PC-9 (cell line): ENCODE measurements at regions of chr6 and their contacts with region 1.

Region 1: GRCh38 chr6:75208298-75209183 is 2.7 kb upstream of the COL12A1 start:
- DNase-seq: peak; percentile 63 to 83
- H3K4me3 ChIP-seq: no peak overlapping the region
- H3K27ac ChIP-seq: no peak overlapping the region
- H3K4me1 ChIP-seq: peaks cover 28% of the 10 kb centered on the region; the same call in 1 of the 2 replicates
- H3K27me3 ChIP-seq: 0 out of 2 replicates have a peak, but pooled peaks cover 4% of the 10 kb centered on the region
- CTCF ChIP-seq: peak; percentile 88

Region 2: DNA sequence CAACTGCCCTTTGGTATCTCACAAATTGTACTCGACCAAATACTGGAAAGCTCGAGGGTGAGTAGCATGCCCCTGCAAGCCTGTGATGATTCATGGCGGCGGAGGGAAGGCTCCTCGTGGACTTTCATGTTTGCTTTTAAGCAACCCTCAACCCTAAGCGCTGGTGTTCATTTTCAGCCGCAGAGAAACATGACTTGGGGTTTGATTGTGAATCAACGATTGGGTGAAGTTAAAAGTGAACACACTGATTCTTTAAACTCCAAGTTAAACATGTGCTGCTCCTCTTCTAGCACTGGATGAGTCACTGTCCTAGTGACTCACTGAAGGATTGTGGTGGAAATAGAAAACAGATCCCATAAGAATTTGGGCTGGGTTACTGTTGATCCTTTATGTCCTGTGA is 1504.3 kb before region 1 on chr6:
- CTCF ChIA-PET with region 1: interaction called, 13 read pairs
- POLR2A ChIA-PET with region 1: interaction called, 3 read pairs
- intact Hi-C with region 1: no loop called
- DNase-seq: peak; percentile 78 to 83
- H3K4me3 ChIP-seq: peak overlapping the region; percentile 11; the same call in 1 of the 2 replicates
- H3K27ac ChIP-seq: peak overlapping the region; percentile 80
- H3K4me1 ChIP-seq: peaks cover 26% of the 10 kb centered on the region
- H3K27me3 ChIP-seq: no peaks in the 10 kb centered on the region
- CTCF ChIP-seq: no peak

Region 3: DNA sequence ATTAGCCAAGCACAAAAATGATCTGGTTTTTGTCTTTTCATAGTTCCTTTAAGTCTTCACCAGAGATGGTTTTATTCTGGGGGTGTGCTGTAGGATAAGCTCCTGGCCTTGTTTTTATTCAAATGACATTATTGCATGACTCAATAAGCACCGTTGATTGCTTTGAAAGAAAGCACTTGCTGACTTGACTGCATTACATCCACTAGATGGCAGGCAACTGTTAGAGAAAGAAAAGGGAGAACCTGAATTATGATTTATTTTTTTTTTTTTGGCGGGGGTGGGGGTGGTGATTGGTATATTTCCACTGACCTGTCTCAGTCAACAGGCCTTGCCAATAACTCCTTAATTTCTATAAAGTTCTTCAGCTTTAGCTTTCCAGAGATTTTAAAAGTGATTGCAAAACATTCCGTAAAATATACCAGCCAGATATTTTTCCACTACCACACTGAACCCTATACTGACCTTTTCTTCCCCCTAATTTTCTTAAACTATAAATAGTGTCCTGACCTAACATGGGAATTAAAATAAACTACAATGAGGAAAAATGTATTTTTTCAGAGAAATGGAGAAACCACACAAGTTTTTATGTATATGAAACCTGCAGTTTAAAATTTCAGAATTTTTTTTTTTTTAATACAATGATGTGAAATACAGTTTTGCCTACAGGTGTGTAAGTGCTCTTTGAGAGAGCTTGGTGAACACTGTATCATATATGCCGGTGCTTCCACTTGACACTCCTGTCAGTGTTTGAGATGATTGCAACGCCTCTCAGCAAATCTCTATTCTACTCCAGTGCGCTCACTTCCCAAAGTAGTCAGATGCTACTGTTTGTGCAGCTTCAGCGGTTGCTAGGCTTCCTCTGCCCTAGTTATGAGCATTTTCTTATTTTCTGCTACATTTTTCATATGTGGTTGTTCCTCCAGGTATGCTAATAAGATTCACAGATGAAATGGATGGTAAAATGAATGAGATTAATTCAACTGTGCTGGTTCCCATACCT is 1238.3 kb before region 1 on chr6:
- CTCF ChIA-PET with region 1: no interaction called
- POLR2A ChIA-PET with region 1: no interaction called
- intact Hi-C with region 1: loop called (anchors 1 kb)
- DNase-seq: peak in 1 of 2 experiments; percentile 56
- H3K4me3 ChIP-seq: no peak overlapping the region
- H3K27ac ChIP-seq: no peak overlapping the region
- H3K4me1 ChIP-seq: peaks cover 5% of the 10 kb centered on the region; the same call in 1 of the 2 replicates
- H3K27me3 ChIP-seq: no peaks in the 10 kb centered on the region
- CTCF ChIP-seq: peak; percentile 88

Region 4: DNA sequence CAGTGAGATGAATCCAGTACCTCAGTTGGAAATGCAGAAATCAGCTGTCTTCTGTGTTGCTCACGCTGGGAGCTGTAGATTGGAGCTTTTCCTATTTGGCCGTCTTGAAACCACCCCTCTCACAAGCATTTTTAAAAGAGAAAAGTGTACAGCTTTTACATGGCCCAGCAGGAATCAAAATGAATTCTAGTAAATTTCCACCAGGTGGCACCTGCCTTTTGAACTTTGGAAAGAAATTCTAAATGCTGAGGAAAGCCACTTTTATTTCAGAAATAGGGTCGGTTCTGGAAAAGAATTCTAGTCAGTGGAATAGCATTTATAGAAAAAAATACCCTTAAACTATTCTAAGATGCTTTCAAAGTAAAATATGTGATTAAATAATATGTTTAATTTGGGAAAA is 864.7 kb before region 1 on chr6:
- CTCF ChIA-PET with region 1: interaction called, 4 read pairs
- POLR2A ChIA-PET with region 1: no interaction called
- intact Hi-C with region 1: loop called (anchors 5 kb)
- DNase-seq: no peak
- H3K4me3 ChIP-seq: no peak overlapping the region
- H3K27ac ChIP-seq: no peak overlapping the region
- H3K4me1 ChIP-seq: no peaks in the 10 kb centered on the region
- H3K27me3 ChIP-seq: no peaks in the 10 kb centered on the region
- CTCF ChIP-seq: peak; percentile 49; the same call in 1 of the 2 replicates

Region 5: GRCh38 chr6:74606581-74607071 is 601.9 kb before region 1 on chr6:
- CTCF ChIA-PET with region 1: no interaction called
- POLR2A ChIA-PET with region 1: no interaction called
- intact Hi-C with region 1: loop called (anchors 10 kb)
- DNase-seq: peak; percentile 18 to 59
- H3K4me3 ChIP-seq: no peak overlapping the region
- H3K27ac ChIP-seq: peak overlapping the region; percentile 22; the same call in 1 of the 2 replicates
- H3K4me1 ChIP-seq: peaks cover 22% of the 10 kb centered on the region
- H3K27me3 ChIP-seq: no peaks in the 10 kb centered on the region
- CTCF ChIP-seq: no peak

Region 6: DNA sequence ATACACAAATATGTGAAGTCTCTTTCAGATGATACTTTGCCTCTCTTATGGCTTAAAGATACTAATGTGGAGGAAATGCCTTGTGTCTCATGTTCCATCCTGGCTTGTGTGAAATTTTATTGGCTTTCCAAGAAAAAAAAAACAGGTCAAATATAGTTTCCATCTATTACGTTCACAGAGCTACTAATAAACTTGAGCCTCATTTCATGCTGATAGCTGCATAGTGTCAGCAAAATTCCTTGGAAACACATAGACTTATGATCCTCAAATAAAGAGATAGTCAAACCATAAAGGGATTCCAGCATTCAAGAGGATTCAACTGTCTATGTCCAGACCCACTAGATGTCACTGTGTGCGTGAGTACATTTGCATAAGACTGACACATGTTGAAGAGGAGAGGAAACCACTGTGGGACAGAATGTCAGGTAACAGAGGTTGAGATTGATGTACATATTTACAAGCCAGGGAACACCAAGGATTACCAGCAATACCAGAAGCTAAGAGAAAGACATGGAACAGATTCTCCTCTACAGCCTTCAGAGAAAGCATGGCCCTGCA is 269.3 kb before region 1 on chr6:
- CTCF ChIA-PET with region 1: interaction called, 5 read pairs
- POLR2A ChIA-PET with region 1: no interaction called
- intact Hi-C with region 1: loop called (anchors 10 kb)
- DNase-seq: no peak
- H3K4me3 ChIP-seq: no peak overlapping the region
- H3K27ac ChIP-seq: no peak overlapping the region
- H3K4me1 ChIP-seq: no peaks in the 10 kb centered on the region
- H3K27me3 ChIP-seq: no peaks in the 10 kb centered on the region
- CTCF ChIP-seq: no peak

Region 7: DNA sequence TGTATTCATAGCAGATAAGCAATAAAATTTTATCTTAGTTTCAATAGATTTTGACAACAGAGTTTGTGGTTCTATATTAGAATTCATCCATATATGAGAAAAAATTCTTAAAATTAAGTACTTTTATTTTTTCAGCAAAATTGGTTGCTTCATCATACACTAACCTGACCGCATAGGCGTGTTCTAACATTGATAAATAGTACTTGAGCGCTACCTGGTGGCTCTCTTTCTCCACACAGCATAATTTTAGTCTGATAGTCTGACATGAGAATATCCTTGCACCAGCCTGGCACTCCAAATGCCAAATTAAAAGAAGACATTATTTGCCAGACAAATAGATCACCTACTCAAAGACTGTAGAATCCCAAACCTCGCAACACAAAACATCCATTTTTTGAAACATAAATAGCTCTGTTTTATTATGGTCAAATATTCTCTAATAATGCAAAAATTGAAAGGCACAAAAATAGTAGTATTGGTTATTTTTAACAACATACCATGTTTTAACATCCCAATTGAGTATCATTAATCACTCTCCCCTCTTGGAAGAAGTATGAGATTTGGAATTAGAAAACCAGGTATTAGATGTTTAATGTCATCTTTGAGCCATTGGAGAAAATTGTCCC is 318.1 kb after region 1 on chr6:
- CTCF ChIA-PET with region 1: interaction called, 3 read pairs
- POLR2A ChIA-PET with region 1: no interaction called
- intact Hi-C with region 1: loop called (anchors 1 kb)
- DNase-seq: peak; percentile 50 to 67
- H3K4me3 ChIP-seq: no peak overlapping the region
- H3K27ac ChIP-seq: no peak overlapping the region
- H3K4me1 ChIP-seq: peaks cover 12% of the 10 kb centered on the region
- H3K27me3 ChIP-seq: no peaks in the 10 kb centered on the region
- CTCF ChIP-seq: peak; percentile 83

Region 8: GRCh38 chr6:75775219-75775618 is 566.7 kb after region 1 on chr6:
- CTCF ChIA-PET with region 1: no interaction called
- POLR2A ChIA-PET with region 1: no interaction called
- intact Hi-C with region 1: no loop called
- DNase-seq: no peak
- H3K4me3 ChIP-seq: no peak overlapping the region
- H3K27ac ChIP-seq: no peak overlapping the region
- H3K4me1 ChIP-seq: no peaks in the 10 kb centered on the region
- H3K27me3 ChIP-seq: no peaks in the 10 kb centered on the region
- CTCF ChIP-seq: no peak